PC-3 (cell line): ENCODE measurements at regions of chr4 and their contacts with region 1.

Region 1: DNA sequence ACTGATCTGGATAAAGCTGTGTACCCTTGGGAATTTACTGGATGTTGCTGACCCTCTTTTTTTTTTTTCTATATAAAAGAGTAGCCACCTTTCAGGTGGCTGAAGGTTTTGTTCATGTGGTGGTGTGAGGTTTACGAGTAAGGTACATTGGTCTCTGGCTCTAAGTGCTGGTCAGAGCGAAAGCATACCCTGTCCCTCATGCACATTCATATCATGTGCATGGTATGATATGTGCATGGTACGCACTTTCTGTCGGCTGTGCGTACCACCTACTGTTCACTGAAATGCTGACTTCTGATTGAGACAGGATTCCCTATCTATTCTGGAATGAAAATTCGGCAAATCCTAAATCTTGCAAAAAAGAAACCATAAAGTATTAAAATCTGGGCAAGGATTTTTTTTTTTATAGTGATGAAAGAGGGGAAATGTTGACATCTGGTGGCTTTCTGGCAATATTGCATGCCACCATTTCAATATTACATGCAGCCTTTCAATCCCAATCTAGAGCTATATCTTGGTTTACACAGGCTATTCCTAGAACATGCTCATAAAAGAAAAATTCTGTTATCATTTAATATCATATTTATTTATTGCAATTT is 32.8 kb downstream of the FAM149A start:
- DNase-seq: peak; percentile 45
- ATAC-seq: peak; percentile 50; the same call in 1 of the 2 replicates
- H3K4me3 ChIP-seq: peak overlapping the region; percentile 41; the same call in 1 of the 2 replicates
- H3K27ac ChIP-seq: no peak overlapping the region
- H3K4me1 ChIP-seq: no peaks in the 10 kb centered on the region
- H3K27me3 ChIP-seq: no peaks in the 10 kb centered on the region
- CTCF ChIP-seq: peak; percentile 65

Region 2: DNA sequence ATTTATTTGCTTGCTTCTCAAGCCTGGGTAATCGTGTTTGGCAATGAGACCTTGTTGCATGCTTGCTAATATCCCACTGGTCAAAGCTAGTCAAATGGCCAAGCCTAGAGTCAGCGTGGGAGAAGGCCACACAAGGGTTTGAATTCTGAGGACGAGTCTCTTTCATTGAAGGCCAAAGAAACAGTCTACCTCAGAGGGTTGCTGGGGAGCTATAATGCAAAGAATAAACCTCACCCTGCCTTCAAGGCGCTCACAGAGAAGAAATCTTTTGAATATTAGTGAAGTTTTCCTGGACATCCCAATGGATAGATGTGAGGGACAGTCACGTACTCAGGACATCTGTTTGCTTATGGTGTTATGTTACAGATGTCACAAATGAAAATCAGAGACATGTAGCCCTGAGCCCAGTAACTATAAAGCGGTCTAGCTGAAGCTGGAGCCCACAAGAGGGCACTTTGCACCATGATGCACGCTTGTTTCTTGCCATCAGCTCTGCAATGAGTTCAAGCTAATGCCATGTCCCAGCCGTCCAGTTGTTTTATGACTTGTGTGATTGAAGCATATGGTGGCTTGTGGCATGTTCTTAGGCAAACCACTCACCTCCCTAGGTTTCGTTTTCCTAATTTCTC is 69.4 kb before region 1 on chr4:
- CTCF ChIA-PET with region 1: interaction called, 11 read pairs
- POLR2A ChIA-PET with region 1: no interaction called
- intact Hi-C with region 1: loop called (anchors 1 kb)
- DNase-seq: peak; percentile 58
- ATAC-seq: peak; percentile 84
- H3K4me3 ChIP-seq: peak overlapping the region; percentile 68
- H3K27ac ChIP-seq: no peak overlapping the region
- H3K4me1 ChIP-seq: peaks cover 8% of the 10 kb centered on the region; the same call in 1 of the 2 replicates
- H3K27me3 ChIP-seq: no peaks in the 10 kb centered on the region
- CTCF ChIP-seq: peak; percentile 56

Region 3: GRCh38 chr4:186342582-186342981 is 205.3 kb after region 1 on chr4:
- CTCF ChIA-PET with region 1: no interaction called
- POLR2A ChIA-PET with region 1: no interaction called
- intact Hi-C with region 1: no loop called
- DNase-seq: peak; percentile 50
- ATAC-seq: no peak
- H3K4me3 ChIP-seq: no peak overlapping the region
- H3K27ac ChIP-seq: no peak overlapping the region
- H3K4me1 ChIP-seq: no peaks in the 10 kb centered on the region
- H3K27me3 ChIP-seq: peaks cover 23% of the 10 kb centered on the region
- CTCF ChIP-seq: no peak